ENCODE measurements at regions of chr20 and their contacts with region 1.

Region 1: GRCh38 chr20:41913146-41913545 is 295.0 kb upstream of the CHD6 start:
- DNase-seq: no peak
- ATAC-seq: no peak
- H3K4me3 ChIP-seq: no peak overlapping the region
- H3K27ac ChIP-seq: no peak overlapping the region
- H3K4me1 ChIP-seq: no peaks in the 10 kb centered on the region
- H3K27me3 ChIP-seq: no peaks in the 10 kb centered on the region
- CTCF ChIP-seq: no peak

Region 2: GRCh38 chr20:41577129-41578009 is 335.8 kb before region 1 on chr20:
- intact Hi-C with region 1: no loop called
- DNase-seq: no peak
- ATAC-seq: no peak
- H3K4me3 ChIP-seq: no peak overlapping the region
- H3K27ac ChIP-seq: no peak overlapping the region
- H3K4me1 ChIP-seq: peaks cover 31% of the 10 kb centered on the region
- H3K27me3 ChIP-seq: no peaks in the 10 kb centered on the region
- CTCF ChIP-seq: no peak

Region 3: DNA sequence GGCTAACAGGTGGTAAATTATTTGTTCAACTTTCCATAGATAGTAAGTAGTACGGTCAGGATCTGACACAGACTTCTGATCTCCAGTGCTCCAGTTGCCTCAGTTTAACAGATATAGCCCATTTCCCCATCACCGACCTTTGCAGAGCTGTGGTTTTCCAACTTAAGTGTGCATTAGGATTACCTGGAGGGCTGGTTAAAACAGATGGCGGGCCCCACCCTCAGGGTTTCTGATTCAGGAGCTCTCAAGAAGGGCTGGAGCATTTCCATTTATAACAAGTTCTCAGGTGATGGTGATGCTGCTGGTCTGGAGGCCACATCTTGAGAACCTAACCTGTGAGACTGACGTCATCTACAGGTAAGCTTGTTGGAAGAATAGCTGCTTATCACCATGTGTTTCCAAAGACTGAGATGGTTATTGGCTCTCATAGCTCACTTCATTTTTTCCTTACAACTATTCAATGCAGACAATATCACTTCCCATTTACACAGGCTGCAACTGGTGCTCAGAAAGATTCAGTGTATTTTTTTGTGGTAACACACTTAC is 65.2 kb after region 1 on chr20:
- intact Hi-C with region 1: loop called in 1 of 2 experiments (anchors 2 kb)
- DNase-seq: no peak
- ATAC-seq: no peak
- H3K4me3 ChIP-seq: no peak overlapping the region
- H3K27ac ChIP-seq: no peak overlapping the region
- H3K4me1 ChIP-seq: no peaks in the 10 kb centered on the region
- H3K27me3 ChIP-seq: peaks cover 0 to 4% (median 0%) of the 10 kb centered on the region in 3 donors
- CTCF ChIP-seq: no peak

Region 4: GRCh38 chr20:42082611-42083010 is 169.5 kb after region 1 on chr20:
- intact Hi-C with region 1: no loop called
- DNase-seq: peak; percentile 44 to 57
- ATAC-seq: peak in 1 of 4 donors; percentile 33
- H3K4me3 ChIP-seq: no peak overlapping the region
- H3K27ac ChIP-seq: no peak overlapping the region
- H3K4me1 ChIP-seq: no peaks in the 10 kb centered on the region
- H3K27me3 ChIP-seq: peaks cover 0 to 1% (median 0%) of the 10 kb centered on the region in 3 donors
- CTCF ChIP-seq: no peak